PC-3 (cell line): ENCODE measurements at regions of chr17 and their contacts with region 1.

Region 1: GRCh38 chr17:44438636-44439035 is 49.2 kb upstream of the ITGA2B start:
- DNase-seq: no peak
- ATAC-seq: no peak
- H3K4me3 ChIP-seq: no peak overlapping the region
- H3K27ac ChIP-seq: no peak overlapping the region
- H3K4me1 ChIP-seq: no peaks in the 10 kb centered on the region
- H3K27me3 ChIP-seq: no peaks in the 10 kb centered on the region
- CTCF ChIP-seq: no peak

Region 2: DNA sequence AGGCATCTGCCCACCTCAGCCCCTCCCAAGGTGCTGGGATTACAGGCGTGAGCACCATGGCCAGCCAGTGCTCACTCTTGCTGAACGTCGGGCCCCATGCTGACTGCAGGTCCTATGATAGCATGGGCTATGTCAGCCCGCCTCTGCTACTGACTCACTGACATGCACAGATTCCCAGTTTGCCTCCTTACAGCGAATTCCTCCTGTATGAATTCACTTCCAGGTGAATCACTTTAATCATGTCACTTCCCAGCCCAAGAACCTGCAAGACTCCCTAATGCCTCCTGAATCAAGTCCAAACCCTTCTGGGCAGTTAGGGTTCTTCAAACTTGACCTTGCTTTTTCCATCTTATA is 203.1 kb before region 1 on chr17:
- CTCF ChIA-PET with region 1: no interaction called
- POLR2A ChIA-PET with region 1: interaction called, 11 read pairs
- intact Hi-C with region 1: no loop called
- DNase-seq: peak; percentile 96
- ATAC-seq: peak; percentile 94
- H3K4me3 ChIP-seq: 0 out of 2 replicates have a peak overlapping the region, but pooled peaks have one; percentile 6
- H3K27ac ChIP-seq: peak overlapping the region; percentile 96
- H3K4me1 ChIP-seq: peaks cover 30% of the 10 kb centered on the region
- H3K27me3 ChIP-seq: no peaks in the 10 kb centered on the region
- CTCF ChIP-seq: no peak